Naive thymus-derived CD4-positive, alpha-beta T cell (primary cell): ENCODE measurements at regions of chr19 and their contacts with region 1.

Region 1: GRCh38 chr19:53333463-53334449 is at the start of gene ZNF845:
- DNase-seq: peak; percentile 91 to 99 (median 97)
- ATAC-seq: peak; percentile 99
- H3K4me3 ChIP-seq: peak within 1 kb of the TSS; percentile 93
- H3K4me3 Mint-ChIP-seq: peak within 1 kb of the TSS; percentile 87 to 97 (median 94)
- H3K27ac ChIP-seq: peak within 1 kb of the TSS; percentile 74
- H3K27ac Mint-ChIP-seq: peak within 1 kb of the TSS; percentile 87 to 97 (median 89)
- H3K4me1 ChIP-seq: peaks cover 0 to 5% of the 10 kb centered on the region in 2 donors
- H3K4me1 Mint-ChIP-seq: peaks cover 14 to 43% (median 22%) of the 10 kb centered on the region in 7 donors
- H3K27me3 ChIP-seq: no peaks in the 10 kb centered on the region
- H3K27me3 Mint-ChIP-seq: peaks cover 0 to 8% (median 6%) of the 10 kb centered on the region in 5 donors
- total RNA-seq, gene ZNF845: 4.6 to 18.9 (median 11.1) TPM

Region 2: GRCh38 chr19:52296773-52297600 is 1036.8 kb before region 1 on chr19 and contains the start of gene ZNF480:
- CTCF ChIA-PET with region 1: no interaction called
- POLR2A ChIA-PET with region 1: no interaction called
- intact Hi-C with region 1: loop called in 1 of 2 experiments (anchors 2 kb)
- DNase-seq: peak; percentile 67 to 91 (median 87)
- ATAC-seq: peak; percentile 89
- H3K4me3 ChIP-seq: peak within 1 kb of the TSS; percentile 85
- H3K4me3 Mint-ChIP-seq: peak within 1 kb of the TSS; percentile 89 to 99 (median 98)
- H3K27ac ChIP-seq: peak within 1 kb of the TSS; percentile 97
- H3K27ac Mint-ChIP-seq: peak within 1 kb of the TSS; percentile 95 to 99 (median 98)
- H3K4me1 ChIP-seq: peaks cover 4 to 5% of the 10 kb centered on the region in 2 donors
- H3K4me1 Mint-ChIP-seq: peaks cover 15 to 32% (median 19%) of the 10 kb centered on the region in 7 donors
- H3K27me3 ChIP-seq: no peaks in the 10 kb centered on the region
- H3K27me3 Mint-ChIP-seq: peaks cover 0 to 3% (median 0%) of the 10 kb centered on the region in 5 donors
- total RNA-seq, gene ZNF480: 8.5 to 28.9 (median 13.3) TPM

Region 3: DNA sequence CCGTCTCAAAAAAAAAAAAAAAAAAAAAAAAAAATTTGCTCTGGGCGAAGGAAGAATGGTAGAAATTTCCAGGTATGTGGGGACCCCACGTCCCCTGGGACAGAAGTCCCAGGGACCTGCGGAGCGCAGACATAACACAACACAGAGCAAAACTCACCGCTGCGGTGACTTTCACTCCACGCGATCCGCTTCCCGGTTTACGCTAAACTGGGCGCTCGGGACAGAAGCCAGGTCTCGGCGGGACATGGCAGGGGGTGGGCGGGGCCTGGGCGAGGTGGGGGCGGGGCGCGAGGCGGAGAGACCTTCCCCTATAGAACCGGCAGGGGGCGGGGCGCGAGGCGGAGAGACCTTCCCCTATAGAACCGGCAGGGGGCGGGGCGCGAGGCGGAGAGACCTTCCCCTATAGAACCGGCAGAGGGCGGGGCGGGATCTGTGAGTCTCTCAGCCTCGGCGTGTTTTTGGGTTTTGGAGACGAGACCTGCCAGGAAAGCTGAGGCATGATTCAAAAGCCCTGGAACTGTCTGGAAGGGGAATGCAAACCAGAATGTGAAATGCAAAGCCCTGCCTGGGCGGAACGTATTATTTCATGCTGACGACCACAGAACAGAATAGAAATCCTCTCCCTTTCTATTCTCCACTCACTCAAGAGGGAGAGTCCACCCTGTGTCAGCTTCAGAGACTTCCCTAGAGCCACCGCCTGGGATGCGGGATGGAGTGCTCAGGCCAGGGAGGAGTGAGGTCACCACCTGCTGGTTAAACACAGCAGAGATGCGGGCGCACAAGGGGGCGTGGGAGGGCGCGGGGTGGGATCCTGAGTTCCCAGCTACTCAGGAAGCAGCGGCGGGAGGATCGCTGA is 340.2 kb before region 1 on chr19:
- CTCF ChIA-PET with region 1: no interaction called
- POLR2A ChIA-PET with region 1: no interaction called
- intact Hi-C with region 1: loop called in 1 of 2 experiments (anchors 1 kb)
- DNase-seq: peak; percentile 49 to 85 (median 81)
- ATAC-seq: peak; percentile 100
- H3K4me3 ChIP-seq: peak overlapping the region; percentile 60
- H3K4me3 Mint-ChIP-seq: peak overlapping the region; percentile 56 to 92 (median 86)
- H3K27ac ChIP-seq: no peak overlapping the region
- H3K27ac Mint-ChIP-seq: peak overlapping the region in 5 of 9 donors; percentile 25 to 83 (median 54)
- H3K4me1 ChIP-seq: peaks cover 0 to 6% of the 10 kb centered on the region in 2 donors
- H3K4me1 Mint-ChIP-seq: peaks cover 8 to 26% (median 14%) of the 10 kb centered on the region in 7 donors
- H3K27me3 ChIP-seq: no peaks in the 10 kb centered on the region
- H3K27me3 Mint-ChIP-seq: peaks cover 0 to 23% (median 14%) of the 10 kb centered on the region in 5 donors

Region 4: GRCh38 chr19:53254411-53255341 is 79.1 kb before region 1 on chr19 and contains the start of gene ZNF677:
- CTCF ChIA-PET with region 1: no interaction called
- POLR2A ChIA-PET with region 1: no interaction called
- intact Hi-C with region 1: loop called in 1 of 2 experiments (anchors 1 kb)
- DNase-seq: peak; percentile 42 to 86 (median 77)
- ATAC-seq: peak; percentile 100
- H3K4me3 ChIP-seq: peak within 1 kb of the TSS; percentile 54
- H3K4me3 Mint-ChIP-seq: peak within 1 kb of the TSS; percentile 84 to 93 (median 89)
- H3K27ac ChIP-seq: peak within 1 kb of the TSS; percentile 66
- H3K27ac Mint-ChIP-seq: peak within 1 kb of the TSS in 8 of 9 donors; percentile 21 to 94 (median 78)
- H3K4me1 ChIP-seq: peaks cover 0 to 6% of the 10 kb centered on the region in 2 donors
- H3K4me1 Mint-ChIP-seq: peaks cover 0 to 17% (median 11%) of the 10 kb centered on the region in 7 donors
- H3K27me3 ChIP-seq: no peaks in the 10 kb centered on the region
- H3K27me3 Mint-ChIP-seq: peaks cover 0 to 13% (median 12%) of the 10 kb centered on the region in 5 donors
- total RNA-seq, gene ZNF677: 2.2 to 25.9 (median 7.4) TPM

Region 5: DNA sequence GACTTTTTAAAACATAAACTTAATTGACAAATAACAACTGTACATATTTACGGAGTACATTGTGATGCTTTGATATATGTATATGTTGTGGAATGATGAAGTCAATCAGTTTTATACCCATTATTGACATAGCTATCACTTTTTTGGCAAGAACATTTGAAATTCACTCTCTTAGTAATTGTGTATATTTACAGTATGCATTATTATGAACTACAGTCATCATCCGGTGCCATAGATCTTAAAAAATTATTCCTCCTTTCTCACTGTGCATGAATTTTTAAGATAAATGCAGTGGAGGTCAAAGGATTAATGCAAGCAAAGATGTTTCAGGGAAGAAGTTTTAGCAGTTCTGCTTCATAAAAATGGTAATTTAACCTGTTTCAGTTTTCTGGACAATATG is 58.3 kb before region 1 on chr19:
- CTCF ChIA-PET with region 1: no interaction called
- POLR2A ChIA-PET with region 1: no interaction called
- intact Hi-C with region 1: no loop called
- DNase-seq: no peak
- ATAC-seq: no peak
- H3K4me3 ChIP-seq: no peak overlapping the region
- H3K4me3 Mint-ChIP-seq: no peak overlapping the region
- H3K27ac ChIP-seq: no peak overlapping the region
- H3K27ac Mint-ChIP-seq: no peak overlapping the region
- H3K4me1 ChIP-seq: no peaks in the 10 kb centered on the region
- H3K4me1 Mint-ChIP-seq: peaks cover 0 to 2% (median 0%) of the 10 kb centered on the region in 7 donors
- H3K27me3 ChIP-seq: no peaks in the 10 kb centered on the region
- H3K27me3 Mint-ChIP-seq: peaks cover 0 to 18% (median 12%) of the 10 kb centered on the region in 5 donors

Region 6: DNA sequence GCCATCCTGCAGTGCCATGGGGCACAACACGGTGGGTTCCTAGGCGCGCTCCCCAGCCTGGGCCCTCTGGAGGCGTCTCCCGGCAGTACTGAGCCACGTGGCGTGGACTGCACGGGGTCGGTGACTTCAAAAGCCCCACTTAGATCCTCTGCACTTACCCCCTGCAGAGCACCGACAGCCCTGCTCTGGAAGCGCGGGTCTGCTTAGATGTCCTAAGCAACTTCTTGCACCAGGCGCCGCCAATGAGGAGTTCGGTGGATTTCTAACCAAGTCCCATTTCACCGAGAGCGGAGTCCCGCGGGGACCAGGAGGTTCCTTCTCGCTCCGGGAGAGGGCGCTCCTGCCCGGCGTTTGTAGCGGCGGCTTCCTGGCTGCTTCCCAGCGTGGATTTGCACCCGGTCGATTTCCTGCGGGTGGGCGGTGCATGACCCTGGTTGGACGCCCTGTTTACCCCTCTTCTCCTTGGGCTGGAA is 25.4 kb before region 1 on chr19:
- CTCF ChIA-PET with region 1: no interaction called
- POLR2A ChIA-PET with region 1: no interaction called
- intact Hi-C with region 1: no loop called
- DNase-seq: no peak
- ATAC-seq: no peak
- H3K4me3 ChIP-seq: no peak overlapping the region
- H3K4me3 Mint-ChIP-seq: no peak overlapping the region
- H3K27ac ChIP-seq: no peak overlapping the region
- H3K27ac Mint-ChIP-seq: no peak overlapping the region
- H3K4me1 ChIP-seq: no peaks in the 10 kb centered on the region
- H3K4me1 Mint-ChIP-seq: no peaks in the 10 kb centered on the region
- H3K27me3 ChIP-seq: no peaks in the 10 kb centered on the region
- H3K27me3 Mint-ChIP-seq: peaks cover 0 to 45% (median 39%) of the 10 kb centered on the region in 5 donors

Region 7: GRCh38 chr19:53374291-53374690 is 40.5 kb after region 1 on chr19:
- CTCF ChIA-PET with region 1: no interaction called
- POLR2A ChIA-PET with region 1: no interaction called
- intact Hi-C with region 1: no loop called
- DNase-seq: no peak
- ATAC-seq: no peak
- H3K4me3 ChIP-seq: no peak overlapping the region
- H3K4me3 Mint-ChIP-seq: no peak overlapping the region
- H3K27ac ChIP-seq: no peak overlapping the region
- H3K27ac Mint-ChIP-seq: no peak overlapping the region
- H3K4me1 ChIP-seq: no peaks in the 10 kb centered on the region
- H3K4me1 Mint-ChIP-seq: peaks cover 0 to 7% (median 0%) of the 10 kb centered on the region in 7 donors
- H3K27me3 ChIP-seq: no peaks in the 10 kb centered on the region
- H3K27me3 Mint-ChIP-seq: no peaks in the 10 kb centered on the region

Region 8: DNA sequence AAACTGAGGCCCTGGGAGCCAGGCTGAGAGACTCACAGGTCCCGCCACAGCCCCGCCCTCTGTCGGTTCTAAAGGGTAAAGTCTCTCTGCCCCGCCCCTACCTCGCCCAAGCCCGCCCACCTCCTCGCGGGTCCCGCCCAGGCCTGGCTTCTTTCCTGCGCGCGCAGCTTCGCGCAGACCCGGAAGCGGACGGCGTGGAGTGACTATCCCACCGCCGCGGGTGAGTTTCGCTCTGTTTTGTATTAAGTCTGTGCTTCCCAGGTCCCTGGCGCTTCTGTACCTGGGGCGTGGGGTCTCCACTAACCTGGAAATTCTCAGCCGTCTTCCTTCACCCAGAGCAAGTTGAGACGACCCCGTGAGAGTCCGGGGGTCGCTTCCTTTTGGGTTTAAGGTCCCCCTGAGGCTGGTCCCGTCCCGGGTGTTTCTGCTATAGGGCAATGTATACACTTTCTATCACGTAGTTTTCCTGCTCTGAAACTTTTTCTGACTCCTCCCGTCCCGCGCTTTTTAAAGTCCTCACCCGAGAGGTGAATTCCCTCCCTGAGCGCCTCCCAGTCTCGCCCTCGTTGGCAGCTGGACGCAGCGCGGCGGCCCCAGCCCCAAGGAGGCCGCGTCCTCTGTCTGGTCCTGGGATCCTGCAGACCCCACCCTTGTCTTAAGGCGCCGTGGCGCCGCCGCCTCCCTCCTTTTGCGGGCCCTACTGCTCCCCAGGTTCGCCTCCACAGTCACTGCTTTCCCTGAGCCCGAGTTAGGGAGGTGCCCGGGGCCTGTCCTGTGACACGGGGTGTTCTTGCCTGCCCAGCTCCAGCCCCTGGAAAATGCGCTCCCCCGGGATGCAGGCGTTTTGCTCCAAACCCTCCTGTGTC is 61.5 kb after region 1 on chr19 and contains the start of gene ZNF765:
- CTCF ChIA-PET with region 1: no interaction called
- POLR2A ChIA-PET with region 1: no interaction called
- intact Hi-C with region 1: loop called (anchors 1 kb)
- DNase-seq: peak; percentile 92 to 99 (median 97)
- ATAC-seq: peak; percentile 100
- H3K4me3 ChIP-seq: peak within 1 kb of the TSS; percentile 97
- H3K4me3 Mint-ChIP-seq: peak within 1 kb of the TSS; percentile 88 to 97 (median 93)
- H3K27ac ChIP-seq: peak within 1 kb of the TSS; percentile 82
- H3K27ac Mint-ChIP-seq: peak within 1 kb of the TSS; percentile 89 to 97 (median 94)
- H3K4me1 ChIP-seq: peaks cover 5 to 8% of the 10 kb centered on the region in 2 donors
- H3K4me1 Mint-ChIP-seq: peaks cover 13 to 40% (median 31%) of the 10 kb centered on the region in 7 donors
- H3K27me3 ChIP-seq: no peaks in the 10 kb centered on the region
- H3K27me3 Mint-ChIP-seq: no peaks in the 10 kb centered on the region
- total RNA-seq, gene ZNF765: 5.1 to 19.5 (median 11.4) TPM

Region 9: GRCh38 chr19:53467485-53468262 is 133.9 kb after region 1 on chr19 and contains the start of gene ZNF813:
- CTCF ChIA-PET with region 1: no interaction called
- POLR2A ChIA-PET with region 1: no interaction called
- intact Hi-C with region 1: loop called (anchors 1 kb)
- DNase-seq: peak; percentile 81 to 95 (median 92)
- ATAC-seq: peak; percentile 100
- H3K4me3 ChIP-seq: peak within 1 kb of the TSS; percentile 74
- H3K4me3 Mint-ChIP-seq: peak within 1 kb of the TSS; percentile 88 to 96 (median 94)
- H3K27ac ChIP-seq: peak within 1 kb of the TSS; percentile 73
- H3K27ac Mint-ChIP-seq: peak within 1 kb of the TSS; percentile 76 to 96 (median 90)
- H3K4me1 ChIP-seq: no peaks in the 10 kb centered on the region
- H3K4me1 Mint-ChIP-seq: peaks cover 20 to 45% (median 31%) of the 10 kb centered on the region in 7 donors
- H3K27me3 ChIP-seq: no peaks in the 10 kb centered on the region
- H3K27me3 Mint-ChIP-seq: peaks cover 0 to 24% (median 12%) of the 10 kb centered on the region in 5 donors
- total RNA-seq, gene ZNF813: 2.5 to 11.2 (median 4.6) TPM